Left cardiac atrium (tissue), 4 donors: ENCODE measurements at regions of chr19 and their contacts with region 1.

Region 1: GRCh38 chr19:55146078-55146704 is 2.8 kb downstream of the TNNT1 start:
- DNase-seq: no peak
- ATAC-seq: peak in 1 of 2 donors; percentile 10

Region 2: DNA sequence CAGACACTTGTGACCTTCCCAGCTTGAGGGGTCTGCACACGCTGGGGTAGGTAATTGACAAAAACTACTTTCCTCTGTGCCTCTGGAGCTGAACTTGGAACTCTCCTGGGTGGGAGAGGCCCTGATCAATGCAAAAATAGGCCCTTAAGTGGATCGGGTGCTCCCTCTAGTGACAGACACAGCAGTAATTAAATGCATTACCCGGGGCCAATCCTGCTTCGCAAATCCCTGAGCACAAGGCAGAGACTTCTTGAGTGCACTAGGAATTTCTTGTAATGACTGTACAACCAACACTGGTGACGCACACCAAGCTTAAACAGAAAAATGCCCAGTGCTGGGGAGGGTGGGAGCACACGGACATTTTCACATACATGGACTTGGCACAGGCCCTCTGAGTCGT is 272.0 kb after region 1 on chr19:
- intact Hi-C with region 1: loop called (anchors 2 to 10 kb)
- DNase-seq: peak; percentile 37
- ATAC-seq: peak; percentile 87 to 94